ENCODE measurements at regions of chr18 and their contacts with region 1.

Region 1: GRCh38 chr18:24488824-24489493 is 28.5 kb downstream of the HRH4 start:
- DNase-seq: peak in 5 of 9 donors; percentile 31 to 45 (median 38)
- ATAC-seq: peak; percentile 59
- H3K4me3 ChIP-seq: no peak overlapping the region
- H3K4me3 Mint-ChIP-seq: no peak overlapping the region
- H3K27ac ChIP-seq: no peak overlapping the region
- H3K27ac Mint-ChIP-seq: peak overlapping the region in 1 of 9 donors; percentile 8
- H3K4me1 ChIP-seq: peaks cover 0 to 17% of the 10 kb centered on the region in 2 donors
- H3K4me1 Mint-ChIP-seq: peaks cover 4 to 11% (median 5%) of the 10 kb centered on the region in 7 donors
- H3K27me3 ChIP-seq: no peaks in the 10 kb centered on the region
- H3K27me3 Mint-ChIP-seq: peaks cover 6 to 34% (median 19%) of the 10 kb centered on the region in 5 donors

Region 2: GRCh38 chr18:24177499-24178133 is 311.3 kb before region 1 on chr18:
- CTCF ChIA-PET with region 1: no interaction called
- POLR2A ChIA-PET with region 1: no interaction called
- intact Hi-C with region 1: loop called in 1 of 2 experiments (anchors 2 kb)
- DNase-seq: no peak
- ATAC-seq: no peak
- H3K4me3 ChIP-seq: no peak overlapping the region
- H3K4me3 Mint-ChIP-seq: no peak overlapping the region
- H3K27ac ChIP-seq: no peak overlapping the region
- H3K27ac Mint-ChIP-seq: no peak overlapping the region
- H3K4me1 ChIP-seq: no peaks in the 10 kb centered on the region
- H3K4me1 Mint-ChIP-seq: peaks cover 0 to 5% (median 0%) of the 10 kb centered on the region in 7 donors
- H3K27me3 ChIP-seq: no peaks in the 10 kb centered on the region
- H3K27me3 Mint-ChIP-seq: peaks cover 0 to 6% (median 0%) of the 10 kb centered on the region in 5 donors

Region 3: GRCh38 chr18:24362758-24363157 is 126.2 kb before region 1 on chr18:
- CTCF ChIA-PET with region 1: interaction called, 90 read pairs
- POLR2A ChIA-PET with region 1: no interaction called
- intact Hi-C with region 1: loop called (anchors 1 kb)
- DNase-seq: no peak
- ATAC-seq: no peak
- H3K4me3 ChIP-seq: no peak overlapping the region
- H3K4me3 Mint-ChIP-seq: no peak overlapping the region
- H3K27ac ChIP-seq: no peak overlapping the region
- H3K27ac Mint-ChIP-seq: no peak overlapping the region
- H3K4me1 ChIP-seq: no peaks in the 10 kb centered on the region
- H3K4me1 Mint-ChIP-seq: peaks cover 0 to 2% (median 0%) of the 10 kb centered on the region in 7 donors
- H3K27me3 ChIP-seq: no peaks in the 10 kb centered on the region
- H3K27me3 Mint-ChIP-seq: no peaks in the 10 kb centered on the region

Region 4: DNA sequence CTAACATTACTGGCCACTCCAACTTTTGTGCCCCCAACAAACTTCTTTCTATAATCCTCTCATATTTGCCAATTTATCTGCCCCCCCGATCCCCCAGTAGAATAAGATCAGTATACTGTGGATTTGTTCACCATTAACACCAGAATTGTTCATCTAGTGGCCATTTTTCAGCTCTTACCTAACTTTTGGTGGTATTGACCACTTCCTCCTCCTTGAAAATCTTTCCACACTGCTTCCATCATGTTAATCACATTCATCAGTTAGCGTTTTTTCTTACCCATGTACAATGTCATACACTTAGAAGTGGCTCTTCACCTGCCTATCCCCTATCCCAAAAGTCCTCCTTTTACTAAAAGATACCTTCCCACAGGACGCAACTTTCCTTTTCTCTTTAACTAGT is 56.3 kb before region 1 on chr18:
- CTCF ChIA-PET with region 1: interaction called, 3 read pairs
- POLR2A ChIA-PET with region 1: no interaction called
- intact Hi-C with region 1: loop called in 1 of 2 experiments (anchors 2 kb)
- DNase-seq: no peak
- ATAC-seq: no peak
- H3K4me3 ChIP-seq: no peak overlapping the region
- H3K4me3 Mint-ChIP-seq: no peak overlapping the region
- H3K27ac ChIP-seq: no peak overlapping the region
- H3K27ac Mint-ChIP-seq: peak overlapping the region in 1 of 9 donors; percentile 2
- H3K4me1 ChIP-seq: no peaks in the 10 kb centered on the region
- H3K4me1 Mint-ChIP-seq: peaks cover 2 to 16% (median 11%) of the 10 kb centered on the region in 7 donors
- H3K27me3 ChIP-seq: no peaks in the 10 kb centered on the region
- H3K27me3 Mint-ChIP-seq: peaks cover 0 to 3% (median 0%) of the 10 kb centered on the region in 5 donors

Region 5: GRCh38 chr18:24446953-24447538 is 41.9 kb before region 1 on chr18:
- CTCF ChIA-PET with region 1: no interaction called
- POLR2A ChIA-PET with region 1: no interaction called
- intact Hi-C with region 1: loop called in 1 of 2 experiments (anchors 5 kb)
- DNase-seq: no peak
- ATAC-seq: no peak
- H3K4me3 ChIP-seq: no peak overlapping the region
- H3K4me3 Mint-ChIP-seq: no peak overlapping the region
- H3K27ac ChIP-seq: no peak overlapping the region
- H3K27ac Mint-ChIP-seq: no peak overlapping the region
- H3K4me1 ChIP-seq: no peaks in the 10 kb centered on the region
- H3K4me1 Mint-ChIP-seq: peaks cover 0 to 6% (median 0%) of the 10 kb centered on the region in 7 donors
- H3K27me3 ChIP-seq: no peaks in the 10 kb centered on the region
- H3K27me3 Mint-ChIP-seq: no peaks in the 10 kb centered on the region